ENCODE measurements at regions of chr4 and their contacts with region 1.

Region 1: DNA sequence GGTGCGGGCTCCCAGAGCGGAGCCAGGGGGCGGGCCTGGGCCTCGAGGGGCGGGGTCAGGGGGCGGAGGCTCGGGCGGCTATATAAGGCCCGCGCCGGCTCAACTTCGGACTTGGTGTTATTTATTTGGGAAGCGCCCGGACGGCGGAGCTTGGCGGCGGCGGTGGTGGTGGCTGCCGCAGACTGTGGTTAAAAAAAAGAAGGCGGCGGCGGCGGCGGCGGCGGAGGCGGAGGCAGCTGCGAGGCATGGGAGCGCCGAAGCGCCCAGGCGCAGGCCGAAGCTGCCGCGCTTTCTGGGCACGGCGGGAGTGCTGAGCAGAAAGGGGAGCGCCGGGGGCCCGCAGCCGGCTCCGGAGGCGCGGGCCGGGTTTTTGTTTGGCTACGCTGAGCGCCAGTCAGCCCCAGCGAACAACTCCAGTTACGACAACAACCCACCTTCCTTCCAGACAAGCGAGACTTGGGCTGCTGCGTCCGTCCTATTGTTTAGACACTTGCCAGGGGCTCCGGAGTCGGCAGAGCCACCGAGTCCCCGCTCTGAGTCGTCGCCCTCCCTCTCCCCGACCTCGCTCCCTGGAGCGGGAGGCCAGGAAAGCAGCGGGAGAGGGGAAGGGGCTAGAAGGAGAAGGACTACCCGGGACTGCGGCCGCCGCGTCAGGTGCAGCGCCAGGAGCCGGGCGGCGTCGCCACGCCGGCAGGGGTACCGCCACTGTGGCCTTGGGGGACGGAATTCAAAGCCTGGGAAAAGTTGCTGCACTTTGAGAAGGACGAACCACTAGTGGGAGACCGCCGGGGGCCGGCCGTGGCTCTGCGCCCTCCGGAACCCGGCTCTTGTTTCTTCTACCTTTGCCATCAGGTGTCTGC is at the start of gene SLIT2:
- DNase-seq: peak; percentile 55
- H3K4me3 ChIP-seq: peak within 1 kb of the TSS; percentile 62 to 68 (median 65)
- H3K27ac ChIP-seq: no peak within 1 kb of the TSS
- H3K4me1 ChIP-seq: peaks cover 38% of the 10 kb centered on the region
- H3K27me3 ChIP-seq: no peaks in the 10 kb centered on the region
- CTCF ChIP-seq: no peak
- total RNA-seq, gene SLIT2: 0.17 to 4.2 TPM

Region 2: GRCh38 chr4:18689308-18690115 is 1562.5 kb before region 1 on chr4:
- CTCF ChIA-PET with region 1: no interaction called
- dilution Hi-C with region 1: no loop called
- in situ Hi-C with region 1: no loop called
- intact Hi-C with region 1: loop called (anchors 2 kb)
- DNase-seq: peak; percentile 28
- H3K4me3 ChIP-seq: no peak overlapping the region
- H3K27ac ChIP-seq: no peak overlapping the region
- H3K4me1 ChIP-seq: no peaks in the 10 kb centered on the region
- H3K27me3 ChIP-seq: no peaks in the 10 kb centered on the region
- CTCF ChIP-seq: peak; percentile 79 to 83

Region 3: GRCh38 chr4:19224820-19225219 is 1027.2 kb before region 1 on chr4:
- CTCF ChIA-PET with region 1: no interaction called
- dilution Hi-C with region 1: no loop called
- in situ Hi-C with region 1: no loop called
- intact Hi-C with region 1: loop called (anchors 5 kb)
- DNase-seq: no peak
- H3K4me3 ChIP-seq: no peak overlapping the region
- H3K27ac ChIP-seq: no peak overlapping the region
- H3K4me1 ChIP-seq: no peaks in the 10 kb centered on the region
- H3K27me3 ChIP-seq: no peaks in the 10 kb centered on the region
- CTCF ChIP-seq: peak in 1 of 2 donors; percentile 34

Region 4: DNA sequence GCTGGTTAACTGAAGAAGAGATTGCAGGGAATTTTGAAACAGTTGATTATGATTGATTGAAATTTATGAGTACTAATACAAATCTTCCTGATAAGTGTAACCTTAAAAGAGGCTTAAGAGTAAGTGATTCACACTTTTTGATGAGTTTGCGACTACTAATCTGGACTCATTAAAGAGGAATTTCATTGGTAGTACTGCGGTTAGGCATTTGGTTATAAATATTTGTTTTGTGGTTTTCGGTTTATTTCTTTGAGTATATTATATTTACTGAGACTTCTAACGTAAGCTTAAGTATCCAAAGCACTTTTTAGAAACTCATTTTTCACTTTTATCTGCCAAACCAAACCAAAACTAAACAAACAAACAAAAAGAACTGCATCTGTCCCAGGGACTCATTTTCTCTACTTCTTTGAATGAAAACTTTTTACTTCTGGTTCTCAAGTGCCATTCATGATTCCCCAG is 20.4 kb after region 1 on chr4:
- CTCF ChIA-PET with region 1: interaction called, 10 read pairs
- dilution Hi-C with region 1: no loop called
- in situ Hi-C with region 1: no loop called
- intact Hi-C with region 1: no loop called
- DNase-seq: no peak
- H3K4me3 ChIP-seq: no peak overlapping the region
- H3K27ac ChIP-seq: no peak overlapping the region
- H3K4me1 ChIP-seq: no peaks in the 10 kb centered on the region
- H3K27me3 ChIP-seq: no peaks in the 10 kb centered on the region
- CTCF ChIP-seq: no peak

Region 5: DNA sequence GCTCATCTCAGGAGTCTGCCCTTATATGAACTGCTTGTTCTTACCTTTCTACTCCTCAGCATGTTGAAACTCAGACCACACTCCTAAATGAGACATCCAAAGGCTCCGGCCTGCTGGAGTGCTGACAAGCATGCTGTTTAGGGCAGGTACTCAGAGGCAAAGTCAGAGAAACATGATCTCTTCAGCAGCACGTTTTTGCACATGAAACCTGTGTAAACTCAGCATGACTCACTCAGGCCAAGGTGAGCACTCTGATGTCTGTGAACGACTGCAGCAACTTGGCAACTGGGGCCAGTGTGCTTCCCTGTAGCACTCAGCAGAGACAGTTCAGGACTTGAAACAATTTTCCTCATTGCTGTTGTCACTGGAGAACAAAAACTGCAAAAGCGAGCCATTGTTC is 557.8 kb after region 1 on chr4:
- CTCF ChIA-PET with region 1: no interaction called
- dilution Hi-C with region 1: no loop called
- in situ Hi-C with region 1: no loop called
- intact Hi-C with region 1: no loop called
- DNase-seq: peak; percentile 96
- H3K4me3 ChIP-seq: no peak overlapping the region
- H3K27ac ChIP-seq: no peak overlapping the region
- H3K4me1 ChIP-seq: peaks cover 9% of the 10 kb centered on the region
- H3K27me3 ChIP-seq: no peaks in the 10 kb centered on the region
- CTCF ChIP-seq: no peak

Measured in mammary epithelial cell (primary cell).